Caco-2 (cell line): ENCODE measurements at regions of chr15 and their contacts with region 1.

Region 1: GRCh38 chr15:58517682-58518525 is 86.1 kb downstream of the LIPC start:
- DNase-seq: no peak
- H3K4me3 ChIP-seq: no peak overlapping the region
- H3K4me3 Mint-ChIP-seq: no peak overlapping the region
- H3K27ac Mint-ChIP-seq: no peak overlapping the region
- H3K4me1 ChIP-seq: peaks cover 31% of the 10 kb centered on the region
- H3K4me1 Mint-ChIP-seq: peaks cover 39% of the 10 kb centered on the region
- H3K27me3 ChIP-seq: no peaks in the 10 kb centered on the region
- H3K27me3 Mint-ChIP-seq: no peaks in the 10 kb centered on the region
- CTCF ChIP-seq: no peak

Region 2: GRCh38 chr15:58545307-58546065 is 27.6 kb after region 1 on chr15:
- CTCF ChIA-PET with region 1: no interaction called
- POLR2A ChIA-PET with region 1: no interaction called
- intact Hi-C with region 1: loop called (anchors 1 kb)
- DNase-seq: no peak
- H3K4me3 ChIP-seq: no peak overlapping the region
- H3K4me3 Mint-ChIP-seq: no peak overlapping the region
- H3K27ac Mint-ChIP-seq: no peak overlapping the region
- H3K4me1 ChIP-seq: peaks cover 4% of the 10 kb centered on the region
- H3K4me1 Mint-ChIP-seq: peaks cover 22% of the 10 kb centered on the region
- H3K27me3 ChIP-seq: no peaks in the 10 kb centered on the region
- H3K27me3 Mint-ChIP-seq: no peaks in the 10 kb centered on the region
- CTCF ChIP-seq: no peak

Region 3: GRCh38 chr15:58785355-58785754 is 267.5 kb after region 1 on chr15:
- CTCF ChIA-PET with region 1: no interaction called
- POLR2A ChIA-PET with region 1: no interaction called
- intact Hi-C with region 1: no loop called
- DNase-seq: no peak
- H3K4me3 ChIP-seq: no peak overlapping the region
- H3K4me3 Mint-ChIP-seq: no peak overlapping the region
- H3K27ac Mint-ChIP-seq: no peak overlapping the region
- H3K4me1 ChIP-seq: no peaks in the 10 kb centered on the region
- H3K4me1 Mint-ChIP-seq: peaks cover 2% of the 10 kb centered on the region
- H3K27me3 ChIP-seq: no peaks in the 10 kb centered on the region
- H3K27me3 Mint-ChIP-seq: no peaks in the 10 kb centered on the region
- CTCF ChIP-seq: no peak